ENCODE measurements at regions of chr11 and their contacts with region 1.

Region 1: GRCh38 chr11:112588252-112588694 is 327.6 kb upstream of the PLET1 start:
- DNase-seq: peak; percentile 68
- H3K4me3 ChIP-seq: no peak overlapping the region
- H3K27ac ChIP-seq: no peak overlapping the region
- H3K4me1 ChIP-seq: no peaks in the 10 kb centered on the region
- CTCF ChIP-seq: peak; percentile 86

Region 2: GRCh38 chr11:112219476-112220232 is 368.6 kb before region 1 on chr11:
- CTCF ChIA-PET with region 1: no interaction called
- POLR2A ChIA-PET with region 1: no interaction called
- intact Hi-C with region 1: loop called (anchors 10 kb)
- DNase-seq: peak; percentile 79
- H3K4me3 ChIP-seq: no peak overlapping the region
- H3K27ac ChIP-seq: no peak overlapping the region
- H3K4me1 ChIP-seq: no peaks in the 10 kb centered on the region
- CTCF ChIP-seq: peak; percentile 88

Region 3: GRCh38 chr11:112289588-112290492 is 298.4 kb before region 1 on chr11:
- CTCF ChIA-PET with region 1: no interaction called
- POLR2A ChIA-PET with region 1: no interaction called
- intact Hi-C with region 1: loop called (anchors 5 kb)
- DNase-seq: peak; percentile 64
- H3K4me3 ChIP-seq: peak overlapping the region; percentile 49
- H3K27ac ChIP-seq: no peak overlapping the region
- H3K4me1 ChIP-seq: peaks cover 5% of the 10 kb centered on the region
- CTCF ChIP-seq: peak; percentile 83

Region 4: DNA sequence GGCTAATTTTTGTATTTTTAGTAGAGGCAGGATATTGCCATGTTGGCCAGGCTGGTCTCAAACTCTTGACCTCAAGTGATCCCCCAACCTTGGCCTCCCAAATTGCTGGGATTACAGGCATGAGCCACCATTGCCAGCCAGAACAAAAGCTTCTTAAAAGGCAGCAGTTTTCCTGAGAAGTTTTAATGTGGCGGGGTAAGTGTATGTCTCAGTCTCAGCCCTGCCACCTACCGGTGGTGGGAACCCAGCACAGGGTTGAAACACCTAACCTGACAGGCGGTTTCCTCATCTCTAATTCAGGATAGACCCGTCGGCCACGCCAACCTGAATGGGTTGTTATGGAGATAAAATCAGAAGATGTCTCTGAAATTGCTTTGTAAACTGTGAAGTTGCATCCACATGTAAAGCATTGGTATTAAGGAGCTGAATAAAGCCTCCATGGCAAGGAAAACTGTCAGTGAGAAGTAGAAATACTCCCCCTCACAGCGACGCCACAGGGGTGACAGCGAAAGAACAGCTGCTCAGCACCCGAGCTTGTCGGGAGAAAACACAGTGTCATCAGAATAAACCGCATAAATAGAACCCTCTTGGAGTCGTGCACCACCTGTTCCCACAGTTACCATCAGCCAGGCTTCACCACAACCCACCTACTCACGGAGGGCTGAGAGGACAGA is 207.0 kb after region 1 on chr11:
- CTCF ChIA-PET with region 1: no interaction called
- POLR2A ChIA-PET with region 1: no interaction called
- intact Hi-C with region 1: loop called (anchors 2 kb)
- DNase-seq: peak; percentile 31
- H3K4me3 ChIP-seq: no peak overlapping the region
- H3K27ac ChIP-seq: no peak overlapping the region
- H3K4me1 ChIP-seq: no peaks in the 10 kb centered on the region
- CTCF ChIP-seq: peak; percentile 67

Region 5: DNA sequence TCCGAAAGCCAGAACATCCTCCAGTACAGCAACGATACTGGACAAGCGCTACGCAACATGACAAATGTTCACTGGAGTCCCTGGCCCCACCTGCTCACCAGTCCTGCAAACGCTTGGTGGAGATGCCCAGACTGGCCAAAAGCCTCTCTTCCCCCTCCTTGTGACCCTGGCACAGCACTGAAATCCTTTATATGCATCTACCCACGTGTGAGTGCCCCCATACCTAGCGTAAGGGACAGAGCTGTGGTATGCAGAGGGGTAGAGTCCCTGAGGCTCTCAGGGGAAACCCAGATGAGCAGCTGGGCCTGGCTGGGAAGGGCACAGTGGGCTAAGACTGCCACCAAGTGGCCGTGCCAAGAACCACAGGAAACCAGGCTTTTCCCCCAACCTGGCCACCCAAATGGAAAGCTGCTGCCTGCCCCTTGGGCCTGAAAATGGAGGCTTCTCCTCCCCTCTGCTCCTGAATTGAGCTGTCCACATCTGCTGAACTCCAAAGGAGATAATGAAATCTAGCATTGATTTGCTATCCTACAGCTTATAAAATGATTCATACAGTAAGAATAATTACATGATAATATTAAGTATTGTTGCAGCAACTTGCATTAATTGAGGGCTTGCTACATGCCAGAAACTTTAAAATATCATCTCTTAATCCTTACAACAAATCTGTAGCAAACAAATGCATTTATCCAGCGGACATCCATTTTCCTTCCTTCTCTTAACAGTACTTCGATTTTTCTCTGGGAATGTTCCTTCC is 701.3 kb after region 1 on chr11:
- CTCF ChIA-PET with region 1: no interaction called
- POLR2A ChIA-PET with region 1: no interaction called
- intact Hi-C with region 1: loop called (anchors 5 kb)
- DNase-seq: peak; percentile 47
- H3K4me3 ChIP-seq: no peak overlapping the region
- H3K27ac ChIP-seq: no peak overlapping the region
- H3K4me1 ChIP-seq: no peaks in the 10 kb centered on the region
- CTCF ChIP-seq: peak; percentile 84